Activated CD8-positive, alpha-beta T cell treated with anti-CD3 and anti-CD28 coated beads for 36 hours (primary cell): ENCODE measurements at regions of chr2 and their contacts with region 1.

Region 1: GRCh38 chr2:158189526-158189925 is 87.8 kb downstream of the UPP2 start:
- DNase-seq: no peak
- ATAC-seq: no peak
- H3K4me3 Mint-ChIP-seq: no peak overlapping the region
- H3K27ac Mint-ChIP-seq: no peak overlapping the region
- H3K4me1 Mint-ChIP-seq: peaks cover 27% of the 10 kb centered on the region
- H3K27me3 Mint-ChIP-seq: peaks cover 23% of the 10 kb centered on the region
- CTCF ChIP-seq: no peak

Region 2: GRCh38 chr2:157957596-157957995 is 231.9 kb before region 1 on chr2:
- CTCF ChIA-PET with region 1: no interaction called
- POLR2A ChIA-PET with region 1: no interaction called
- intact Hi-C with region 1: no loop called
- DNase-seq: no peak
- ATAC-seq: no peak
- H3K4me3 Mint-ChIP-seq: no peak overlapping the region
- H3K27ac Mint-ChIP-seq: no peak overlapping the region
- H3K4me1 Mint-ChIP-seq: no peaks in the 10 kb centered on the region
- H3K27me3 Mint-ChIP-seq: no peaks in the 10 kb centered on the region
- CTCF ChIP-seq: no peak

Region 3: GRCh38 chr2:158456309-158457066 is 267.0 kb after region 1 on chr2 and contains the starts of genes CCDC148 and PKP4:
- CTCF ChIA-PET with region 1: no interaction called
- POLR2A ChIA-PET with region 1: no interaction called
- intact Hi-C with region 1: loop called (anchors 5 kb)
- DNase-seq: peak; percentile 94
- ATAC-seq: peak; percentile 97
- H3K4me3 Mint-ChIP-seq: peak within 1 kb of the TSS; percentile 94
- H3K27ac Mint-ChIP-seq: peak within 1 kb of the TSS; percentile 87
- H3K4me1 Mint-ChIP-seq: peaks cover 25% of the 10 kb centered on the region
- H3K27me3 Mint-ChIP-seq: peaks cover 12% of the 10 kb centered on the region
- CTCF ChIP-seq: no peak
- total RNA-seq, gene CCDC148: not detected
- total RNA-seq, gene PKP4: 33.7 to 38.7 TPM

Region 4: GRCh38 chr2:158692372-158693103 is 503.0 kb after region 1 on chr2:
- CTCF ChIA-PET with region 1: no interaction called
- POLR2A ChIA-PET with region 1: no interaction called
- intact Hi-C with region 1: no loop called
- DNase-seq: no peak
- ATAC-seq: no peak
- H3K4me3 Mint-ChIP-seq: no peak overlapping the region
- H3K27ac Mint-ChIP-seq: no peak overlapping the region
- H3K4me1 Mint-ChIP-seq: no peaks in the 10 kb centered on the region
- H3K27me3 Mint-ChIP-seq: peaks cover 6% of the 10 kb centered on the region
- CTCF ChIP-seq: no peak